Activated CD8-positive, alpha-beta T cell treated with anti-CD3 and anti-CD28 coated beads for 36 hours (primary cell): ENCODE measurements at regions of chr1 and their contacts with region 1.

Region 1: GRCh38 chr1:24513706-24514105 is 11.1 kb downstream of the RCAN3 start:
- DNase-seq: no peak
- ATAC-seq: no peak
- H3K4me3 Mint-ChIP-seq: no peak overlapping the region
- H3K27ac Mint-ChIP-seq: peak overlapping the region; percentile 0
- H3K4me1 Mint-ChIP-seq: peaks cover 61% of the 10 kb centered on the region
- H3K27me3 Mint-ChIP-seq: no peaks in the 10 kb centered on the region
- CTCF ChIP-seq: no peak

Region 2: DNA sequence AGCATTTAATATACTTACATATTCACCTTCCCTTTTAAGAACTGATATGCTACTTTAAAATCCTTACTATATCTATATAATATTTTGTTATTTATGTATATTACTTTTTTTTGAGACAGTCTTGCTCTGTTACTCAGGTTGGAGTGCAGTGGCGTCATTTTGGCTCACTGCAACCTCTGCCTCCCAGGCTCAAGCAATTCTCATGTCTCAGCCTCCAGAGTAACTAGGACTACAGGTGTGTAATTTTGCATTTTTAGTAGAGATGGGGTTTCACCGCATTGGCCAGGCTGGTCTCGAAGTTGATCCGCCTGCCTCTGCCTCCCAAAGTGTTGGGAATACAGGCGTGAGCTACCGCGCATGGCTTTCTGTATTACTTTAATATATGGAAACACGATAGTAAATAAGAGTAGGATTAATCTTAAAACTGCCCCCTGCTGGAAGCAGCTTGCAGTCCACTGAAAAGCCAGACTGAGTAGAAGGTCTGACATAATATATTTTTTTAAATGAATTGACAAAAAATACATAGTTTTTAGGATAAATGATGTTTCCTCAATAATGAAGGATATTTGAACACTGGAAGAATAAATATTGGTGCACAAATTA is 13.3 kb after region 1 on chr1:
- CTCF ChIA-PET with region 1: interaction called, 110 read pairs
- POLR2A ChIA-PET with region 1: interaction called, 7 read pairs
- intact Hi-C with region 1: no loop called
- DNase-seq: peak; percentile 70
- ATAC-seq: peak; percentile 65
- H3K4me3 Mint-ChIP-seq: no peak overlapping the region
- H3K27ac Mint-ChIP-seq: peak overlapping the region; percentile 55
- H3K4me1 Mint-ChIP-seq: peaks cover 57% of the 10 kb centered on the region
- H3K27me3 Mint-ChIP-seq: no peaks in the 10 kb centered on the region
- CTCF ChIP-seq: peak; percentile 82